ENCODE measurements at regions of chr12 and their contacts with region 1.

Region 1: DNA sequence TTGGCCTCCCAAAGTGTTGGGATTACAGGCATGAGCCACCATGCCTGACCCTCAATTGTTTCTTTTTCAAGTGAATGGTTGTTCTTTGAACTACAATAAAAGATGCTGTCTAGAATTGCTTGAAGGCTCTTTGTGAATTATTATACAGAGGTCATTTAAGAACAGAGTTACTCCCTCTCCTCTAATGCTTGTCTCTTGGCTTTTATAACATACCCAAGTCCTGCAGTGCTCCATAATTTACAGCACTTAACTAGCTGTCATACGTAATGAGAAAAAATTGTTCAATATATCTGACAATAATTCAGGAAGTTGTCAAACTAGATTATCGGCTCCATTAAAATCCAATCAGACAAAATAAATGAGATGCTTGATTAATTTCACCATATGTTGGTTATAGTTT is 823.0 kb upstream of the ATXN7L3B start:
- DNase-seq: no peak
- ATAC-seq: no peak
- H3K4me3 ChIP-seq: no peak overlapping the region
- H3K27ac ChIP-seq: no peak overlapping the region
- H3K4me1 ChIP-seq: no peaks in the 10 kb centered on the region
- H3K27me3 ChIP-seq: no peaks in the 10 kb centered on the region
- CTCF ChIP-seq: no peak

Region 2: GRCh38 chr12:73629893-73630831 is 84.5 kb before region 1 on chr12:
- CTCF ChIA-PET with region 1: no interaction called
- POLR2A ChIA-PET with region 1: no interaction called
- in situ Hi-C with region 1: no loop called
- intact Hi-C with region 1: no loop called
- DNase-seq: no peak
- ATAC-seq: no peak
- H3K4me3 ChIP-seq: no peak overlapping the region
- H3K27ac ChIP-seq: no peak overlapping the region
- H3K4me1 ChIP-seq: no peaks in the 10 kb centered on the region
- H3K27me3 ChIP-seq: no peaks in the 10 kb centered on the region
- CTCF ChIP-seq: no peak

Region 3: GRCh38 chr12:73815072-73815645 is 100.5 kb after region 1 on chr12:
- CTCF ChIA-PET with region 1: interaction called, 22 read pairs
- POLR2A ChIA-PET with region 1: no interaction called
- in situ Hi-C with region 1: no loop called
- intact Hi-C with region 1: no loop called
- DNase-seq: no peak
- ATAC-seq: no peak
- H3K4me3 ChIP-seq: no peak overlapping the region
- H3K27ac ChIP-seq: no peak overlapping the region
- H3K4me1 ChIP-seq: no peaks in the 10 kb centered on the region
- H3K27me3 ChIP-seq: no peaks in the 10 kb centered on the region
- CTCF ChIP-seq: no peak

Measured in Panc1 (cell line).